PC-9 (cell line): ENCODE measurements at regions of chr1 and their contacts with region 1.

Region 1: DNA sequence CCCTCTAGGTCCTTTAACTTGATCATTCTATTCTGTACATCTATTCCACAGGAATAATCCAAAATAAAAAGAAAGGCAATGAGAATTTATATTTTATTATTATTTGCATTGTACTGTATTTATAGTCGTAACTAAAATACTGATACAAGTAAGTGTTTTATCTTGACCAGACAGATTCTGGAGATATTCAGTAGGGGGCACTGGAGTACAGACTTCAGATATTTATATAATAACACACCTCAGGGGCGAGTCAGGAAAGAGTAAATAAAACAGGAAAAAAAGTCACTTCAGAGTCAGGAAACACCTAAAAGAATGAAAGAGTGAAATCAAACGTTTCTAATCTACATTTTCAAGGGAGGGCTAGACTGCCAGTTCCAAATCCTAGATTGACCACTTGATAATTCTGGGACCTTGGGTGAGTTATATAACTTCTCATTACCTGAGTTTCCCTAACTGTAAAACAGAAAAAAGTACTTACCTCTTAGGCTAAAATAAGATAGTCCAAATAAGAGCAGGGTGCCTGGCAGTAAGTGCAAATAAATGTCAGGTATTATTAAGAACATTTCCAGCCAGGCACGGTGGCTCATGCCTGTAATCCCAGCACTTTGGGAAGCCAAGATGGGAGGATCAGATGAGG is 31.1 kb upstream of the MTF1 start:
- DNase-seq: peak in 1 of 2 experiments; percentile 55
- H3K4me3 ChIP-seq: no peak overlapping the region
- H3K27ac ChIP-seq: 0 out of 2 replicates have a peak overlapping the region, but pooled peaks have one; percentile 17
- H3K4me1 ChIP-seq: peaks cover 3% of the 10 kb centered on the region; the same call in 1 of the 2 replicates
- H3K27me3 ChIP-seq: no peaks in the 10 kb centered on the region
- CTCF ChIP-seq: peak; percentile 77

Region 2: DNA sequence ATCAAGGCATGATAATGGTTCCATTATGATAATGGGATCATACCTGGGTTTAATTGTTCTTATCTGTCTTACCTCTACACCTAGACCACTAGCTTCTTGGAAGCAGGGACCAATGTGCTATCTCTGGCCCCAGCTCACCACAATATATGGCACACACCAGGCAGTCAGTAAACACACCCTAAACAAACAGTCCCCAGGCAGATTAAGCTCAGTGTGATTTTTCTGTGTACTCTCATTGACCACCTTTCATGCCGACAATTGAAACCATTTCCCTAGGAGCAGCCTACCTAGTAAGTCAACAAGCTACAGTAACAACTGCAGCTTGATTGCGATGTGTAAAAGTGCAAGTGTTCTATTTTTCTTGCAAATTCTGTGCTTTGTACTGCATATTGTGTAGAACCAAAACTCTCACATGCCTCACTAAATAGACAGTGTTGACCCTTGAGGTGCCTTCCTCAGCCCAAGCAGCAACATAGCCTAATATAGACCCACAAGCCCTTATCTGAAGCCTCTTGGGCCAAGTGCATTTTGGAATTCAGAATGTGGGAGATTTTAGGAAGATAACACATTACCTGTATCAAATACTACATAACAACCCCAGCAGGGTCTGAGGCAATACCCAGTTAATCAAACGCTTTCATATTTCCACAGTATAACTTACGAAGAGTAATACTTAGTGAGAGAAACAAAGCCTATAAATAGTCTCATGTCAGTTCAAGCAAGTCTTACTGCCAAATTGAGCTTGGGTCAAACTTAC is 24.4 kb after region 1 on chr1:
- CTCF ChIA-PET with region 1: no interaction called
- POLR2A ChIA-PET with region 1: no interaction called
- intact Hi-C with region 1: no loop called
- DNase-seq: no peak
- H3K4me3 ChIP-seq: no peak overlapping the region
- H3K27ac ChIP-seq: no peak overlapping the region
- H3K4me1 ChIP-seq: no peaks in the 10 kb centered on the region
- H3K27me3 ChIP-seq: no peaks in the 10 kb centered on the region
- CTCF ChIP-seq: no peak

Region 3: DNA sequence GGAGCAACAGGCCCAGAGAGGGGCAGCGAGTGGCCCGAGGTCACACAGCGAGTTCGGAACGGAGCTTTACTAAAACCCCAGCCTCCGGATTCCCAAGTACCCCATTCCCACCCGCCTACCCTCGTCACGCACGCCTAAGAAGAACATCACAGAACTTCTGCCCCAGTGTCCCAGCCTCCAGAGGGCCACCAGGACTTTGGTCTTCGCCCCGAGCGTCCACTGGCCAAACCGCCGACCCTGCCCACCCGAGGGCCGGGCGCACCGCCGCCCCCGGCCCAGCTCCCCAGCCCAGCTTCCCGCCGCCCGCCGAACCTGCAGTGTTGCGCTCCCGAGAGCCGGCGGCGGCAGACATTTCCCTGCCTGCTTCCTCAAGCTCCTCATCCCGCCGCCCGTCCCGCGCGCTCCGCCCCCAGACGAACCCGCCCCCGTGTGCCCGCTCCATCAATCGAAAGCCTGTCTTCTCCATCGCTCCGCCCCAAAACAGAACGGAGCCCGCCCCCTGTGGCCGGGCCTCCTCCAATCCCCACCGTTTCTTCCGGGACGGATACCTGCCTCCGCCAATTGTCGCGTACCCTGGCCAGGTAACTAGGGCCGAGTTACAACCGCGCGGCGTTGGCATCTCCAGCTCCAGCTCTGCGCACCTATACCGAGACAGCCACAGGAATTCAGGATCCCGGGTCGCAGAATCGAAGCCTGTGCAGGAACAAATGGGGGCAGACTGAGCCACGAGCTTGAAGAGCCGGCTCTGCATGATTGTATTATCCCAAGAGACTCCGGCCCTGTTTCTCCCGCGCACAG is 41.1 kb after region 1 on chr1:
- CTCF ChIA-PET with region 1: interaction called, 12 read pairs
- POLR2A ChIA-PET with region 1: interaction called, 5 read pairs
- intact Hi-C with region 1: loop called (anchors 5 kb)
- DNase-seq: peak; percentile 96 to 100
- H3K4me3 ChIP-seq: peak overlapping the region; percentile 78
- H3K27ac ChIP-seq: peak overlapping the region; percentile 28; the same call in 1 of the 2 replicates
- H3K4me1 ChIP-seq: peaks cover 38% of the 10 kb centered on the region
- H3K27me3 ChIP-seq: no peaks in the 10 kb centered on the region
- CTCF ChIP-seq: no peak

Region 4: GRCh38 chr1:37978541-37978940 is 88.0 kb after region 1 on chr1:
- CTCF ChIA-PET with region 1: no interaction called
- POLR2A ChIA-PET with region 1: no interaction called
- intact Hi-C with region 1: loop called (anchors 1 kb)
- DNase-seq: no peak
- H3K4me3 ChIP-seq: no peak overlapping the region
- H3K27ac ChIP-seq: no peak overlapping the region
- H3K4me1 ChIP-seq: no peaks in the 10 kb centered on the region
- H3K27me3 ChIP-seq: no peaks in the 10 kb centered on the region
- CTCF ChIP-seq: no peak

Region 5: GRCh38 chr1:38018864-38019343 is 128.4 kb after region 1 on chr1:
- CTCF ChIA-PET with region 1: no interaction called
- POLR2A ChIA-PET with region 1: no interaction called
- intact Hi-C with region 1: loop called (anchors 2 kb)
- DNase-seq: no peak
- H3K4me3 ChIP-seq: no peak overlapping the region
- H3K27ac ChIP-seq: no peak overlapping the region
- H3K4me1 ChIP-seq: peaks cover 7% of the 10 kb centered on the region
- H3K27me3 ChIP-seq: no peaks in the 10 kb centered on the region
- CTCF ChIP-seq: peak; percentile 64